PC-3 (cell line): ENCODE measurements at regions of chr6 and their contacts with region 1.

Region 1: GRCh38 chr6:3209114-3210023 is 18.1 kb downstream of the TUBB2B start:
- DNase-seq: peak; percentile 99
- ATAC-seq: peak; percentile 99
- H3K4me3 ChIP-seq: peak overlapping the region; percentile 39
- H3K27ac ChIP-seq: peak overlapping the region; percentile 73
- H3K4me1 ChIP-seq: peaks cover 27% of the 10 kb centered on the region
- H3K27me3 ChIP-seq: no peaks in the 10 kb centered on the region
- CTCF ChIP-seq: peak; percentile 52

Region 2: GRCh38 chr6:2988426-2989331 is 220.7 kb before region 1 on chr6:
- CTCF ChIA-PET with region 1: no interaction called
- POLR2A ChIA-PET with region 1: no interaction called
- intact Hi-C with region 1: no loop called
- DNase-seq: peak; percentile 96
- ATAC-seq: peak; percentile 66
- H3K4me3 ChIP-seq: peak overlapping the region; percentile 76
- H3K27ac ChIP-seq: peak overlapping the region; percentile 97
- H3K4me1 ChIP-seq: peaks cover 39% of the 10 kb centered on the region
- H3K27me3 ChIP-seq: no peaks in the 10 kb centered on the region
- CTCF ChIP-seq: peak; percentile 86

Region 3: GRCh38 chr6:3125815-3126214 is 83.6 kb before region 1 on chr6:
- CTCF ChIA-PET with region 1: no interaction called
- POLR2A ChIA-PET with region 1: no interaction called
- intact Hi-C with region 1: loop called (anchors 1 kb)
- DNase-seq: no peak
- ATAC-seq: peak; percentile 29; the same call in 1 of the 2 replicates
- H3K4me3 ChIP-seq: no peak overlapping the region
- H3K27ac ChIP-seq: no peak overlapping the region
- H3K4me1 ChIP-seq: peaks cover 4% of the 10 kb centered on the region
- H3K27me3 ChIP-seq: no peaks in the 10 kb centered on the region
- CTCF ChIP-seq: no peak

Region 4: DNA sequence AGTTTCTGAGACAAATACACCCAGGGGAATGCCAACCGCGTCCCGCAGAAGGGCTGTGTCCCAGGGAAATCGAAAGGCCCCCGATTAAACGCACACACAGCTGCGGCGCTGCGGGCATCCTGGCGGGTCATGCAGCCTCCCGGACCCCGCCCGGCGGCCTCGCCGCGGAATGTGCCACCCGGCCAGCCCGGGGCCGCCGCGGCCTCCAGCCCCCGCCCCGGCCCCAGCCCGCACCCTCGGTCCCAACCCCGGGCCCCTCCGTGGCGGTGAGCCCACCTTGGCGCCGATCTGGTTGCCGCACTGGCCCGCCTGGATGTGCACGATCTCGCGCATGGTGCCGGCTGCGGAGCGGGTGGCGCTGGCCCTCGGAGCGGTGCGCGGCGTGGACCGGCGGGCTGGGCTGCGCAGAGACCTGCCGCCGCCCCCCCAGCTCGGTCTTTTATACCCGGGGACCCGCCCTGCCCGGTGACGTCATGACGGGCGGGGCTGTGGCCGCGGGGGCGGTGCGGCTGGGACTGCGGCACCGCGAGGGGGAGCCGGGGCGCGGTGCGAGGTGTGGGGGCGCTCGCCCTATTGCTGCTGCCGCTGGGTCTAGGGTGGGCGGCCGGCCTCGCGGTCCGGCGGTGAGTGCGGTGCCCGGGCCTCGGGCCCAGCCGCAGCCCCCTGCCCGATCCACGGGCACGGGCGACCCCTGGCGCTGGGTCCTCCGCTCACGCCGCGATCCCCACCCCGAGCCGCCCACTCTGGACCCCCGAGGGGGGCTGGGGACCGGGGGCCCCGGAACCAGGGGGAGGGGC is 52.0 kb before region 1 on chr6 and contains the start of gene TUBB2A:
- CTCF ChIA-PET with region 1: interaction called, 14 read pairs
- POLR2A ChIA-PET with region 1: interaction called, 9 read pairs
- intact Hi-C with region 1: loop called (anchors 1 kb)
- DNase-seq: peak; percentile 81
- ATAC-seq: peak; percentile 63
- H3K4me3 ChIP-seq: peak within 1 kb of the TSS; percentile 92
- H3K27ac ChIP-seq: 0 out of 2 replicates have a peak within 1 kb of the TSS, but pooled peaks have one; percentile 8
- H3K4me1 ChIP-seq: peaks cover 12% of the 10 kb centered on the region
- H3K27me3 ChIP-seq: no peaks in the 10 kb centered on the region
- CTCF ChIP-seq: peak; percentile 54
- total RNA-seq, gene TUBB2A: 66.8 and 70.2 TPM in 2 replicates

Region 5: GRCh38 chr6:3162565-3163247 is 46.7 kb before region 1 on chr6:
- CTCF ChIA-PET with region 1: interaction called, 14 read pairs
- POLR2A ChIA-PET with region 1: interaction called, 9 read pairs
- intact Hi-C with region 1: loop called (anchors 1 kb)
- DNase-seq: peak; percentile 78
- ATAC-seq: peak; percentile 82
- H3K4me3 ChIP-seq: peak overlapping the region; percentile 74
- H3K27ac ChIP-seq: peak overlapping the region; percentile 69
- H3K4me1 ChIP-seq: peaks cover 27% of the 10 kb centered on the region
- H3K27me3 ChIP-seq: no peaks in the 10 kb centered on the region
- CTCF ChIP-seq: no peak

Region 6: GRCh38 chr6:3427687-3428085 is 218.3 kb after region 1 on chr6:
- CTCF ChIA-PET with region 1: no interaction called
- POLR2A ChIA-PET with region 1: no interaction called
- intact Hi-C with region 1: no loop called
- DNase-seq: peak; percentile 54
- ATAC-seq: peak; percentile 67
- H3K4me3 ChIP-seq: no peak overlapping the region
- H3K27ac ChIP-seq: no peak overlapping the region
- H3K4me1 ChIP-seq: peaks cover 22% of the 10 kb centered on the region
- H3K27me3 ChIP-seq: no peaks in the 10 kb centered on the region
- CTCF ChIP-seq: no peak